Activated CD4-positive, alpha-beta memory T cell treated with anti-CD3 and anti-CD28 coated beads, Interleukin-2, amount 10 ng/mL, durations not matched to agents 7 days and 5 days (primary cell): ENCODE measurements at regions of chr20 and their contacts with region 1.

Region 1: DNA sequence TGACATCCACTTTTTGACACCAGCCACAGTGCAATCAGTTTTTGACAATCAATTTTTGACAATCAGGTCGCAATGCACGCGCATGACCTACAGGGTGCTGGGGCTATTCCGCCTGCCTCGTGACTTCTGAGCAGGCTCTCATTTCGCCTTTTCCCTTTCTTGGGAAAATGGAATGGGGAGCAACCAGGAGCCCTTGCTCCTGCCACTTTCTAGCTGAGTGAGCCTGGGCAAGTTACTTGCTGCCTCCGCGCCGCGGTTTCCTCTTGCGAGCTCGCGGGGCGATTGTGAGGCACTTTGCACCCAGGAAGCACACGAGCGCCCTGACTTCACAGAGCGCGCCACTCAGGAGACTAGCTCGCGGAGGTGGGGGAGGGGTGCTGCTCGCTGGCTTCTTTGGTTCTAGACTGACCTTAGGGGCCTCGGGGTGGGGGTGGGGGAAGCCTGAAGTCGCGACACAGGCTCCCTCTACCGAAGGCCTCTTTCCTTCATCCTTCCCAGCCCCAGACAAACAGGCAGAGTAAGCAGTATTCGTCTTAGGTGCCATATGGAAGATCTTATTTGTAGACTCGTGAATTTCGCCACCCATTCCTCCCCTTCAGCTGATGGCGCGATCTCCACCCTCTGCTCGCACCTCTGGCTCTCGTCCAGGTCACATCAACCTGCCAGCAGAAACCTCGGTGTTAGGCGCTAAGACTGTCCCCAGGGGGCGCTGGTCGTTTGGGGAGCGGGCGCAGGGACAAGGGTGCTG is 4.6 kb downstream of the TP53TG5 start:
- DNase-seq: peak; percentile 89
- H3K4me3 Mint-ChIP-seq: peak overlapping the region; percentile 74
- H3K27ac Mint-ChIP-seq: peak overlapping the region; percentile 83
- H3K4me1 Mint-ChIP-seq: peaks cover 34% of the 10 kb centered on the region
- H3K27me3 Mint-ChIP-seq: no peaks in the 10 kb centered on the region

Region 2: GRCh38 chr20:45279992-45280391 is 93.5 kb before region 1 on chr20:
- CTCF ChIA-PET with region 1: no interaction called
- POLR2A ChIA-PET with region 1: no interaction called
- DNase-seq: no peak
- H3K4me3 Mint-ChIP-seq: no peak overlapping the region
- H3K27ac Mint-ChIP-seq: no peak overlapping the region
- H3K4me1 Mint-ChIP-seq: peaks cover 4% of the 10 kb centered on the region
- H3K27me3 Mint-ChIP-seq: peaks cover 44% of the 10 kb centered on the region

Region 3: DNA sequence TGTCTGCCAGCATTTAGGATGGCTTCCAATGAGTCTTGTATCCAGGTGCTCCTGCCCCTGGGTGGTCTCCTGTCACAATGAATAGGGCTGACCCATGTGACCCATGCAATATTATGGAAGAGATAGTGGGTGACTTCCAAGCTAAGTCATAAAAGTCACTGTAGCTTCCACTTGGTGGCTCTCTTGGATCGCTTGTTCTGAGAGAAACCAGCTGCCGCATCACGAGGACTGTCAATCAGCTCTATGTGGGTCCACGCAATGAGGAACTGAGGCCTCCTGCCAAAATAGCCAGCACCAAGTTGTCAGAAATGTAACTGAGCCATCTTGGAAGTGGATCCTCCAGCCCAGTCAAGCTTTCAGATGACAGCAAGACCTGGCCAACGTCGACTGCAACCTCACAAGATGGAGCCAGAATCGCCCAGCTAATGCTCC is 50.6 kb before region 1 on chr20:
- CTCF ChIA-PET with region 1: interaction called, 47 read pairs
- POLR2A ChIA-PET with region 1: interaction called, 4 read pairs
- DNase-seq: no peak
- H3K4me3 Mint-ChIP-seq: no peak overlapping the region
- H3K27ac Mint-ChIP-seq: no peak overlapping the region
- H3K4me1 Mint-ChIP-seq: peaks cover 30% of the 10 kb centered on the region
- H3K27me3 Mint-ChIP-seq: no peaks in the 10 kb centered on the region

Region 4: DNA sequence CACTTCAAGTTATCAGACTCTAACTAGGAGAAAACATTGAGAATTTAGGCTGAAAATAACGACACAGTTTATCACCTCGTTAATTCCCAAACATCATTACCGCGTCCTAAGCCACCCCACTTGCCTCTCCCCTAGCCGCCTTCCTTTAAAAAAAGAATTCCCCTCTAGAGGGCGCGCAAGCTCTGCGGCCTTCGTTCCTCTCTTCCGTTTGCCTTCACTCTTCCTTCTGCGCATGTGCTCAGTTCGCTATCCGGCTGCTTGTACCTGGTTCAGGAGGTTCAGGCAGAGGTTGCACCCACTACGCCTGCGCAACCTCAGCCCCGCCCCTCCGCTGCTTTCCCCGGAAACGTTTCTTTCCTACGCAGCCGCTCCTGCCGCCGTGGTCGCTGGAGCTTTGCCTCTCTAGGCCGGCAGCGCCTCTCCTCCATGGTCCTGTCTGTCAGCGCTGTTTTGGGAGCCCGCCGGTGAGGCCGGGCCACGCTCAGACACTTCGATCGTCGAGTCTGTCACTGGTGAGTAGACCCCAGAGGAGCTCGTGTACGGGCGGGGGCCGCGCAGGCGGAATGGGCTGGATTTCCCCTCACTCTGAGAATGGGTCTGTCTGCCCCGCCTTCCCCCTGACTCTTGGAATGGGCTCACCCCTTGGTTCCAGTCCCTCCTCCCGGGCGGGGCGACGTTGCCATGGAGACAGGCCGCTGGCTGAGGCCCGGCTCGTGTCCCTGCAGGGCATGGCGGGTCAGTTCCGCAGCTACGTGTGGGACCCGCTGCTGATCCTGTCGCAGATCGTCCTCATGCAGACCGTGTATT is 10.5 kb before region 1 on chr20 and contains the start of gene SYS1:
- CTCF ChIA-PET with region 1: interaction called, 104 read pairs
- POLR2A ChIA-PET with region 1: interaction called, 63 read pairs
- DNase-seq: peak; percentile 98
- H3K4me3 Mint-ChIP-seq: peak within 1 kb of the TSS; percentile 92
- H3K27ac Mint-ChIP-seq: peak within 1 kb of the TSS; percentile 91
- H3K4me1 Mint-ChIP-seq: peaks cover 65% of the 10 kb centered on the region
- H3K27me3 Mint-ChIP-seq: no peaks in the 10 kb centered on the region
- total RNA-seq, gene SYS1: 22.1 to 24.2 TPM

Region 5: DNA sequence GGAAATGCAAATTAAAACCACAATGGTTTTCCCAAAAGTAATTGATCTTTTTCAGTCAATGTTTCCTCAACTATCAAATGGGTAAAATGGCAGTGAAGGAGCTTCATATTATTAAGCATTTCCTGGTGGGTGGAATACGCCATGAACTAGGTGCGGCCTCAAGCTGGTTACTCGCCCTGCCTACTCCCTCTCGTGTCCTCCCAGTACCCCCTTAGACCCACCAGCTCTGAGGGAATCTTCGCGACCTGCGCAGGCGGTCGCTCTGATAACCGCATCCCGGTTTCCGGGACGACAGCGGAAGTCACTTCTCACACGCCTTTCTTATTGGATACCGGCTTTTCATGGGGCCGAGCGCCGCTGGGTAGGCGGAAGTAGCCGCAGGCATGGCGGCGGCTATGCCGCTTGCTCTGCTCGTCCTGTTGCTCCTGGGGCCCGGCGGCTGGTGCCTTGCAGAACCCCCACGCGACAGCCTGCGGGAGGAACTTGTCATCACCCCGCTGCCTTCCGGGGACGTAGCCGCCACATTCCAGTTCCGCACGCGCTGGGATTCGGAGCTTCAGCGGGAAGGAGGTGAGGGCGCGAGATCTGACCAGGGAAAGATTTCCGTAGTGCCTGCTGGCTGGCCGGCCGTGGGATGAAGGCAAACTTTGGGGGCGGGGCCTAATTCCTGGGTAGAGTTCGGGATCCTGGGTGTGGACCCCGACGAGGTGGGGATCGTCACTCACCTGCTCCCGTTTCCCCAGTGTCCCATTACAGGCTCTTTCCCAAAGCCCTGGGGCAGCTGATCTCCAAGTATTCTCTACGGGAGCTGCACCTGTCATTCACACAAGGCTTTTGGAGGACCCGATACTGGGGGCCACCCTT is 42.5 kb after region 1 on chr20 and contains the start of gene PIGT:
- CTCF ChIA-PET with region 1: interaction called, 28 read pairs
- POLR2A ChIA-PET with region 1: interaction called, 24 read pairs
- DNase-seq: peak; percentile 91
- H3K4me3 Mint-ChIP-seq: peak within 1 kb of the TSS; percentile 93
- H3K27ac Mint-ChIP-seq: peak within 1 kb of the TSS; percentile 91
- H3K4me1 Mint-ChIP-seq: peaks cover 49% of the 10 kb centered on the region
- H3K27me3 Mint-ChIP-seq: no peaks in the 10 kb centered on the region
- total RNA-seq, gene PIGT: 52.4 to 53.0 TPM

Region 6: DNA sequence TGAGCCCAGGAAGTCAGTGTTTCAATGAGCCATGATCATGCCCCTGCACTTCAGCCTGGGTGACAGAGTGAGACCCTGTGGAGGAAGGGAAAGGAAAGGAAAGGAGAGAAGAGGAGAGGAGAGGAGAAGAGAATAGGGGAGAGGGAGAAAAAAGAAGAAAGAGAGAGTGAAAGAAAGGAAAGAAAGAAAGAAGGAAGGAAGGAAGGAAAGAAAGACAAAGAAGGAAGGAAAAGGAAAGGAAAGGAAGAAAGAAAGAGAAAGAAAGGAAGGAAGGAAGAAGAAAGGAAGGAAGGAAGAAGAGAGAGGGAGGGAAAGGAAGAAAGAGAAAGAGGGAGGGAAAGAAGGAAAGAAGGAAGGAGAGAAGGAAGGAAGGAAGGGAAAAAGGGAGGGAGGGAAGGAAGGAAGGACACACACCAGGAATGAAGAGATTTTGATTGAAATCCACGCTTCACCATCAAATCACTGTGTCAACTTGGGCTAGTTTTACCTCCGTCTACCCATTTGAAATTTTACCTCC is 191.3 kb after region 1 on chr20:
- CTCF ChIA-PET with region 1: no interaction called
- POLR2A ChIA-PET with region 1: no interaction called
- DNase-seq: no peak
- H3K4me3 Mint-ChIP-seq: no peak overlapping the region
- H3K27ac Mint-ChIP-seq: no peak overlapping the region
- H3K4me1 Mint-ChIP-seq: no peaks in the 10 kb centered on the region
- H3K27me3 Mint-ChIP-seq: peaks cover 10% of the 10 kb centered on the region

Region 7: DNA sequence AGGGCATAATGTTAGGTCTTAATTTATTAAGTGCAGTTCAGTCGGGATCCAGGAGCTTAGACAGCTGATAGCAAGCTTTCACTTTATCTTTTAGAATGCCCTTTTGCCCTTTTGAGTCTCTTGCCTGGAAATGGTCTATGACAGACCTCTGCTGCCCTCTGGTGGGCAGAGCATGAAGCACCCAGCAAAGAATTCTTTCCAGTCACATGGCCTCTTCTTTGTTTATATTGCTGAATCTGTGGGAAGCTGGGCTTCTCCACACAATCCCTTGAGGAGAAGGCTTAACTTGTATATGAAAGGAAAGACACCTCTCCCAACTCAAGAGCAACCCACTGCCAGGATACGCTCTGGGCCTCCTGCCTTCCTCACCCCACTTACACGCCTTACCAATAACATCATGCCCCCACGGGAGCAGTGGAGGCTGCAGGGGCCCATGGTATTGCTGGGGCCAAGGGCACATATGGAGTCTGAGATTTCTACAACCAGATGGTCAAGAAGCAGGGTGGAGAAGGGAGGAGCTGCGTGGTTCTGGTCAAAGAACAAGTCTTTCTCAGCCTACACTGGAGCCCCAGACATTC is 397.7 kb after region 1 on chr20:
- CTCF ChIA-PET with region 1: interaction called, 34 read pairs
- POLR2A ChIA-PET with region 1: interaction called, 4 read pairs
- DNase-seq: peak; percentile 85
- H3K4me3 Mint-ChIP-seq: no peak overlapping the region
- H3K27ac Mint-ChIP-seq: no peak overlapping the region
- H3K4me1 Mint-ChIP-seq: peaks cover 5% of the 10 kb centered on the region
- H3K27me3 Mint-ChIP-seq: peaks cover 24% of the 10 kb centered on the region